Activated CD8-positive, alpha-beta T cell treated with anti-CD3 and anti-CD28 coated beads, Interleukin-2, amount 10 ng/mL, durations not matched to agents 7 days and 5 days (primary cell): ENCODE measurements at regions of chr4 and their contacts with region 1.

Region 1: GRCh38 chr4:139030614-139031235 is 15.1 kb downstream of the NOCT start:
- DNase-seq: peak; percentile 85
- ATAC-seq: peak; percentile 83
- H3K4me3 Mint-ChIP-seq: no peak overlapping the region
- H3K27ac Mint-ChIP-seq: peak overlapping the region; percentile 0
- H3K4me1 Mint-ChIP-seq: peaks cover 11% of the 10 kb centered on the region
- H3K27me3 Mint-ChIP-seq: no peaks in the 10 kb centered on the region

Region 2: GRCh38 chr4:138938366-138938690 is 92.4 kb before region 1 on chr4:
- CTCF ChIA-PET with region 1: no interaction called
- POLR2A ChIA-PET with region 1: no interaction called
- DNase-seq: no peak
- ATAC-seq: no peak
- H3K4me3 Mint-ChIP-seq: no peak overlapping the region
- H3K27ac Mint-ChIP-seq: no peak overlapping the region
- H3K4me1 Mint-ChIP-seq: no peaks in the 10 kb centered on the region
- H3K27me3 Mint-ChIP-seq: peaks cover 2% of the 10 kb centered on the region

Region 3: DNA sequence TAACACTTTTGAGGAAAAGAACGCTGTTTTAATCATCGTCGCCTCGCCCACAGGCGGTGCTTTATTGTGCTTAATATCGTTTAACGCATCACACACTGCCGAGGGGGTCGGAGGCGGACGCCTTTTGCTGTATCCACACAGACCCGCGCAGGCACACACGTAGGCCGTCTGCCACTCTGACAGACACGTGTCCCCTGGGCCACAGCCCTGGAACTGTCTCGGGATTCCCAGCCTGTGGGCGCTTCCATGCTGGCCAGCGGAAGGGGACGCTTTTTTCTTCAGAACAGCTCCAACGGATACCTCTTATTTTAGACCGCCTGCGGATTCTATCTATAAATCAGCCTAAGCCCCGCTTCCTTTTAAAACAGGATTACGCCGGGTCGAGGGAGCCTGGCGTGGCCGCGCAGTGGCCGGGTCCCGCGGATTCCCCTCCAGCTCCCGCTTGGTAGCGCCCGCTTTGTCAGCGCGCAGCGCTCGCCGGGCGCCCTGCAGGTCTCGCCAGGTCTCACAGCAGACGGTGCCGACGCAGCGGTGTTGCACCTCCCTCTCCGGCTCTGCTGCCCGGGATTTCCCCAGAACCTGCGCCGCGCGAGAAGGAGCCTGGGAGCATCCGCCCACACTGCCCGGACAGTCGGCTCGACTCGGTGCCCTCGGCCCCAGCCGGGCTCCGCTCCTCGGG is 15.3 kb before region 1 on chr4 and contains the start of gene NOCT:
- CTCF ChIA-PET with region 1: interaction called, 50 read pairs
- POLR2A ChIA-PET with region 1: interaction called, 5 read pairs
- DNase-seq: peak; percentile 94
- ATAC-seq: peak; percentile 97
- H3K4me3 Mint-ChIP-seq: peak within 1 kb of the TSS; percentile 93
- H3K27ac Mint-ChIP-seq: peak within 1 kb of the TSS; percentile 96
- H3K4me1 Mint-ChIP-seq: peaks cover 38% of the 10 kb centered on the region
- H3K27me3 Mint-ChIP-seq: no peaks in the 10 kb centered on the region
- total RNA-seq, gene NOCT: 8.6 to 9.3 TPM

Region 4: DNA sequence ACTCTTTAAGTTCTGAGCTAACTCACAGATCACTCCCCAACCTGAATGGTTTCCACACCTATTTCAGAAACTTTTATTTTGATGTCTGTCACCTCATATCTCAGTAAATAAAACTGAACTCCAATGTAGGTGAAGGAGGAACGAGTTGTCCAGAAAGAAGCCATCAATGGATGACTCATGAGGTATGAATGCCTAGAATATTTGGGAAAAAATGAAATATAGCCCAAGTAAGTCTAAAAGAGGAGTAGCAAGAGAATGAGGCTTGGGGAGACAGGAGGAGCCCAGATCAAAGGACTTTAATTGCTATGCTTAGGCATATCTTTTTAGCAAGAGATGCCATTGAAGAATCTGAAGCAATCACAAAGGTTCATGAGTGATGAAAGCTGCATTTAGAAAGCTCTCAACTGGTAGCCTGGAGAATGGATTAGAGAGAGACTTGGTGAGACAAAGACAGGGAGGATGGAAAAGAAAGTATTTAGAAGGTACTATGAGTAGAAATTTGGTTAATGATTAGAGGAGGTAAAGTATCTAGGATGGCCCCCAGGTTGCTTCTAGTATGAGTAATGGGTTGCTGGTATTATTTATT is 24.2 kb after region 1 on chr4:
- CTCF ChIA-PET with region 1: interaction called, 48 read pairs
- POLR2A ChIA-PET with region 1: no interaction called
- DNase-seq: no peak
- ATAC-seq: no peak
- H3K4me3 Mint-ChIP-seq: no peak overlapping the region
- H3K27ac Mint-ChIP-seq: no peak overlapping the region
- H3K4me1 Mint-ChIP-seq: peaks cover 5% of the 10 kb centered on the region
- H3K27me3 Mint-ChIP-seq: no peaks in the 10 kb centered on the region

Region 5: GRCh38 chr4:139083956-139084803 is 53.5 kb after region 1 on chr4:
- CTCF ChIA-PET with region 1: interaction called, 51 read pairs
- POLR2A ChIA-PET with region 1: interaction called, 5 read pairs
- DNase-seq: peak; percentile 85
- ATAC-seq: peak; percentile 66
- H3K4me3 Mint-ChIP-seq: peak overlapping the region; percentile 99
- H3K27ac Mint-ChIP-seq: peak overlapping the region; percentile 99
- H3K4me1 Mint-ChIP-seq: peaks cover 33% of the 10 kb centered on the region
- H3K27me3 Mint-ChIP-seq: no peaks in the 10 kb centered on the region

Region 6: DNA sequence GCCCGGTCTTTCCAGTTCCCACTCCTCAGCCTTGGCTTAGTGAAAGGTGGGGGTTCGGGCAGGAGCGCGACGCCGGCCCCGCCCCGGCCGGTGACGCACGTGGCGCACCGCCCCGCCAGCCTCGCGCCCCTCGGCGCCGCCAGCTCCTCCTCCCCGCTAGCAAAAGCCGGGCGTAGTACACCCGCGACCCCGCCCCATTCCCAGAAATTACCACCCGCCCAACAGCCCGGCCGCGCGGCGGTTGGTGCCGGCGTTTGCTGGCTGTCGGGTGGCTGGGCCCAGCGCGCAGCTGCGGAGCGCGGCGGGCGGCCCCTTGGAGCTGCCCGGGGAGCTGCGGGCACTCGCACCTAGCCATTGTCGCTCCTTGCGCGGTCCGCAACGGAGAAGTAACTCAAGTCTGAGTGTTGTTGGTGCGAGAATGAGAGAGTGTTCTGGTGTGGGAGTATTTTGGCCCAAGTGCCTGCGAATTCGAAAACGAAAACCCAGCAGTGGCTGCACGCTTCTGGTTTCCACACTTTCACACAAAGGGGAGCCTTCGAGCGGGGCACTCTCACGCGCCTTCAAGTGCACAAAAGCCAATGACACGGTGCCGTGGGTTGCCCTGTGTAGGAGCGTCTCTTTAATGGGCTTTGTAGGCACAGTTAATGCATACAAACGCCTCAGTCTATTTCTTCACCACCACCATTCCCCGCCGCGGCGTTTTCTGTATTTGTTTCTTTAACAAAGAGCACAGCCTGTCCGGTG is 147.3 kb after region 1 on chr4:
- CTCF ChIA-PET with region 1: interaction called, 13 read pairs
- POLR2A ChIA-PET with region 1: interaction called, 3 read pairs
- DNase-seq: peak; percentile 94
- ATAC-seq: peak; percentile 78
- H3K4me3 Mint-ChIP-seq: peak overlapping the region; percentile 82
- H3K27ac Mint-ChIP-seq: peak overlapping the region; percentile 89
- H3K4me1 Mint-ChIP-seq: peaks cover 13% of the 10 kb centered on the region
- H3K27me3 Mint-ChIP-seq: peaks cover 32% of the 10 kb centered on the region

Region 7: GRCh38 chr4:139229534-139230039 is 198.9 kb after region 1 on chr4:
- CTCF ChIA-PET with region 1: interaction called, 12 read pairs
- POLR2A ChIA-PET with region 1: interaction called, 3 read pairs
- DNase-seq: no peak
- ATAC-seq: no peak
- H3K4me3 Mint-ChIP-seq: no peak overlapping the region
- H3K27ac Mint-ChIP-seq: no peak overlapping the region
- H3K4me1 Mint-ChIP-seq: peaks cover 2% of the 10 kb centered on the region
- H3K27me3 Mint-ChIP-seq: no peaks in the 10 kb centered on the region

Region 8: DNA sequence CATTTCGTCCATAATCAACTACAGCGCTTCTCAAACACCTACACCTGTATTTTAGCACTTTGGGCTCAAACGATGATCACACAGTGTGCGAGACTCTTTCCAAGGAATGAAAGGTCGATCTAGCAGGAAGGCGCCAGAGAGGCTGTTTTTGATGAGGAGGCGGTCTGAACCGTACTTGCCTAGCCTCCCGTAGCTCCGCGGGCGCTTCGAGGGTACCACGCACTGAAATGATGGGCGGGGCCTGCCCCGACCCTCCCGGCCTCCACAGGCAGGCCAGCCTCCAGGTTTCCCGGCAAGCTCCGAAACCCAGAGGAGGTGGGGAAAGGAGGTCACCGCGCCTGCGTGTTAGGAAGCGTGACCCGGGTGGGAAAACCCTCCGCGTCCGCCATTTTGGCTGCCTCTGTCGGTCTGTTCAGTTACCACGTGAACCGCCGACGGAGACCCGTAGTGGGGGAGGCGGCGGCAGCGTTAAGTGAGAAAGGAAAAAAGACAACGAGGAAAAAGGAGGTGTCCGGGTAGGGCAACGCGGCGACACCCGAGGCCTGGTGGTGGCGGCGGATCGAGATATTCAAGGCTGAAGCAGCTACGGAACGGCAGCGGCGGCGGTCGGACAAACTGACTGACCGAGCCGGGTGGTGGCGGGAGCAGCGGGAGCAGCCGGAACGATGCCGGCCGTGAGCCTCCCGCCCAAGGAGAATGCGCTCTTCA is 270.5 kb after region 1 on chr4 and contains the start of gene NAA15:
- CTCF ChIA-PET with region 1: interaction called, 36 read pairs
- POLR2A ChIA-PET with region 1: no interaction called
- DNase-seq: peak; percentile 98
- ATAC-seq: peak; percentile 94
- H3K4me3 Mint-ChIP-seq: peak within 1 kb of the TSS; percentile 99
- H3K27ac Mint-ChIP-seq: peak within 1 kb of the TSS; percentile 100
- H3K4me1 Mint-ChIP-seq: peaks cover 58% of the 10 kb centered on the region
- H3K27me3 Mint-ChIP-seq: no peaks in the 10 kb centered on the region
- total RNA-seq, gene NAA15: 61.2 to 66.2 TPM